IMR-90 (cell line): ENCODE measurements at regions of chr10 and their contacts with region 1.

Region 1: GRCh38 chr10:15106352-15107013 is 9.3 kb downstream of the RPP38 start:
- DNase-seq: peak; percentile 67
- ATAC-seq: peak; percentile 98
- H3K4me3 ChIP-seq: no peak overlapping the region
- H3K27ac ChIP-seq: no peak overlapping the region
- H3K4me1 ChIP-seq: no peaks in the 10 kb centered on the region
- H3K27me3 ChIP-seq: no peaks in the 10 kb centered on the region
- CTCF ChIP-seq: peak; percentile 91
- POLR2A ChIP-seq: no peak
- RAD21 ChIP-seq: peak; percentile 88

Region 2: GRCh38 chr10:14191871-14192270 is 914.6 kb before region 1 on chr10:
- CTCF ChIA-PET with region 1: no interaction called
- POLR2A ChIA-PET with region 1: no interaction called
- dilution Hi-C with region 1: no loop called
- in situ Hi-C with region 1: no loop called
- intact Hi-C with region 1: loop called (anchors 5 kb)
- DNase-seq: no peak
- ATAC-seq: no peak
- H3K4me3 ChIP-seq: no peak overlapping the region
- H3K27ac ChIP-seq: no peak overlapping the region
- H3K4me1 ChIP-seq: no peaks in the 10 kb centered on the region
- H3K27me3 ChIP-seq: peaks cover 28% of the 10 kb centered on the region
- CTCF ChIP-seq: no peak
- POLR2A ChIP-seq: no peak
- RAD21 ChIP-seq: no peak

Region 3: DNA sequence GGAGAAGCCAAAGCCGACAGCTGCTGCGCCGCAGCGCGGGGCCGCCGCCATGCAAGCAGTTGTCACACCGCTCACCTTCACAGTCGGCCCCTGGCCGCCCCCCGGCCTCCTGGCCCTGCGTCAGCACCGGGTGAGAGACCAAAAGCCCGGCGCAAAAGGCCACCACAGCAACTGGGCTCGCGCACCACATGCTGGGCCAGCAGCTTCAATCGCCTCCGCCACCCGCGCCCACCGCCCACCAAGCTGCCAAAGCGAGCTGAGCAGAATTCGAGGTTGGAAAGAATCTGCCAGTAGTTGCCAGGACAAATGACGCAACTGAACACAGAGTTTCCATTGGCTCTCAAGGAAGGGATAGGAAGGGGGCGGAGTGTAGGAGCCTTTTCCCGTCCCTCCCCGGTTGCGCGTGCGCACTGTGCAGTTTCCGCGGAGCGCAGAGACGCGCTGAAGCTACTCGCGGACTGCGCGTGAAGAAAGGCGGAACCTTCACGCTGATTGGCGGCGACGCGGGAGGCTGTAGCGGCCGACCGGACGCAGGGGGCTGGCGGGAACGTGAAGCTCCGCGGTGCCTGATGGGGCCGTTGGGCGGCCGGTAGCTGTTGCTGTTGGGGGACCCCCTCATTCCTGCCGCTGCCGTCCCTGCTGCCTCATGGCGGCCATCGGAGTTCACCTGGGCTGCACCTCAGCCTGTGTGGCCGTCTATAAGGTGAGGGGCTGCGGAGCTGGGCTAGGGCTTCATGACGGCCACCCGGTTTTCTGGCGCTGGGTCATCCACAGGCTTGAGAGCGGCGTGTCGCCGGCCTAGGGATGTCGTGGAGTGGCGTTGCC is 268.5 kb before region 1 on chr10 and contains the starts of genes CDNF, HSPA14 and MSANTD7:
- CTCF ChIA-PET with region 1: no interaction called
- POLR2A ChIA-PET with region 1: no interaction called
- dilution Hi-C with region 1: no loop called
- in situ Hi-C with region 1: no loop called
- intact Hi-C with region 1: loop called (anchors 10 kb)
- DNase-seq: peak; percentile 99
- ATAC-seq: peak; percentile 97
- H3K4me3 ChIP-seq: peak within 1 kb of the TSS; percentile 74
- H3K27ac ChIP-seq: peak within 1 kb of the TSS; percentile 82
- H3K4me1 ChIP-seq: peaks cover 1% of the 10 kb centered on the region; the same call in 1 of the 2 replicates
- H3K27me3 ChIP-seq: no peaks in the 10 kb centered on the region
- CTCF ChIP-seq: no peak
- POLR2A ChIP-seq: peak; percentile 91
- RAD21 ChIP-seq: 0 out of 2 replicates have a peak, but pooled peaks have one; percentile 8
- total RNA-seq, gene CDNF: 0.72 and 0.83 TPM in 2 replicates
- total RNA-seq, gene HSPA14: 11.8 and 15.6 TPM in 2 replicates
- total RNA-seq, gene MSANTD7: 16.0 and 17.2 TPM in 2 replicates

Region 4: GRCh38 chr10:14953424-14954000 is 153.0 kb before region 1 on chr10:
- CTCF ChIA-PET with region 1: interaction called, 3 read pairs
- POLR2A ChIA-PET with region 1: interaction called, 3 read pairs
- dilution Hi-C with region 1: no loop called
- in situ Hi-C with region 1: no loop called
- intact Hi-C with region 1: loop called (anchors 1 kb)
- DNase-seq: peak; percentile 67
- ATAC-seq: peak; percentile 73
- H3K4me3 ChIP-seq: peak overlapping the region; percentile 51
- H3K27ac ChIP-seq: peak overlapping the region; percentile 42
- H3K4me1 ChIP-seq: no peaks in the 10 kb centered on the region
- H3K27me3 ChIP-seq: no peaks in the 10 kb centered on the region
- CTCF ChIP-seq: 0 out of 2 replicates have a peak, but pooled peaks have one; percentile 19
- POLR2A ChIP-seq: no peak; the same call in 1 of the 2 replicates
- RAD21 ChIP-seq: no peak

Region 5: DNA sequence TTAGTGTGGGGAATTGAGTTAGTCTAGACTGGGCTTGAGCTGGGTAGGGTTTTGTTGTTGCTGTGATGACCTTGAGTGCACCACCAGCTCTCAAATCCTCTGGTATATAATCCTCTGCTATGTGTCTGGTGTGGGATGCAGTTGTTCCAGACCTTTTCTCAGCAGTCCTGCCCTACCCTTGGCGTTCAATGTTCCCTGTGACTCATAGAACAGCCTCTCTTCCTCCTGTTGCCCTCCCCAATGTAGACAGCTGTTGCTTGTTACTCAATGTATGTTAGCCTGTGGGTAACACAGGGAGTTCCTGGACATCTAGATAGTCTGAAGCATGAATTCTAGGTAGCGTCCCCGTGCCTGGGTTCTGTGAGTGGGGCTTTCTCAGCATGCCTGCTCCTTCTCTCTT is 37.7 kb before region 1 on chr10:
- CTCF ChIA-PET with region 1: no interaction called
- POLR2A ChIA-PET with region 1: no interaction called
- dilution Hi-C with region 1: no loop called
- in situ Hi-C with region 1: no loop called
- intact Hi-C with region 1: no loop called
- DNase-seq: peak; percentile 61
- ATAC-seq: peak; percentile 93
- H3K4me3 ChIP-seq: no peak overlapping the region
- H3K27ac ChIP-seq: no peak overlapping the region
- H3K4me1 ChIP-seq: no peaks in the 10 kb centered on the region
- H3K27me3 ChIP-seq: peaks cover 3% of the 10 kb centered on the region; the same call in 1 of the 2 replicates
- CTCF ChIP-seq: no peak
- POLR2A ChIP-seq: no peak
- RAD21 ChIP-seq: no peak

Region 6: DNA sequence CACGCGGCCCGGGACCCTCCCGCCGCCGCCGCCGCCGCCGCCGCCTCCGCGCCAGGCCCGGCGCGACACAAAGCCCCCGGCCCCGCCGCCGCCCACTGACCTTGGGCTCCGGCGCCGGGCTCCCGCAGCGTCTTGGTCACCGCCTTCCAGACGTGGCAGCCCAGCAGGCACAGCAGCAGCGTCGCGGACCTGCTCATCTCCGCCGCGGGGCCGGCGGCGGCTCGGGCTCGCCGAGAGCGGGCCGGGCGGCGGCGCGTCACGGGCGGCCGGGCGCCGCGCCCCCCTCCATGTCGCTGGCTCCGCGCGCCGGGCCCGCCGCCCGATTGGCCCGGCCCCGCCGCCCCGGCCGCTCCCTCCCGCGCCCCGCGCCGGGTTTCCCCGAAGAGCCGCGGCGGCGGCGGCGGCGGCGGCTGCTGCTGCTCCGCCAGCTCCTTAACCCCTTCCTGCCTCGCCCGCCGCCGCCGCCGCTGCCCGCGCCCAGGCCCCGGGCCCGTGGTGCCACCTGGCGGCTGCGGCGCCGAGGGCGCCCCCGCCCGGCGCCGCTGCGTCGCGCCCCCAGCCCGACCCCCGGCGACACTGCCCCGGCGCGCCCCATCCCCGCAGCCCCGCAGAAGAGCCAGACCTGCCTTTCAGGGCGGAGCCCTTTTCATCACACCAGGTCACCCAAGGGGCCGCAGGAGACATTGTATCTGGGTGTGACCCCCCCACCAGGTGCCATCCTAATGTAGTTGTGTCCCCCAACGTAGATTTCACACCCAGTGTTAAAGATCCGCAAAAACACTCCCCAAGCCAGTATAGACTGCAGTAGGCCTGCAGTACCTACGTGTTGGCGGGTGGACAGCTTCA is 264.6 kb after region 1 on chr10 and contains the start of gene FAM171A1:
- CTCF ChIA-PET with region 1: no interaction called
- POLR2A ChIA-PET with region 1: no interaction called
- dilution Hi-C with region 1: no loop called
- in situ Hi-C with region 1: no loop called
- intact Hi-C with region 1: loop called (anchors 5 kb)
- DNase-seq: peak; percentile 29
- ATAC-seq: peak; percentile 84
- H3K4me3 ChIP-seq: peak within 1 kb of the TSS; percentile 91
- H3K27ac ChIP-seq: peak within 1 kb of the TSS; percentile 5; the same call in 1 of the 2 replicates
- H3K4me1 ChIP-seq: 0 out of 2 replicates have a peak, but pooled peaks cover 2% of the 10 kb centered on the region
- H3K27me3 ChIP-seq: peaks cover 5% of the 10 kb centered on the region
- CTCF ChIP-seq: peak; percentile 47
- POLR2A ChIP-seq: no peak
- RAD21 ChIP-seq: no peak
- total RNA-seq, gene FAM171A1: 20.3 and 26.1 TPM in 2 replicates